ENCODE measurements at regions of chr19 and their contacts with region 1.

Region 1: GRCh38 chr19:55216461-55217198 is 7.3 kb upstream of the PTPRH start:
- DNase-seq: peak; percentile 96
- ATAC-seq: peak; percentile 87
- H3K4me3 ChIP-seq: peak overlapping the region; percentile 69 to 94 (median 89)
- H3K27ac ChIP-seq: peak overlapping the region; percentile 89
- H3K4me1 ChIP-seq: peaks cover 45% of the 10 kb centered on the region
- H3K27me3 ChIP-seq: no peaks in the 10 kb centered on the region
- CTCF ChIP-seq: peak; percentile 1; the same call in 1 of the 2 replicates
- EP300 ChIP-seq: peak in 1 of 2 experiments; percentile 65; a peak in 2 of 4 replicates
- POLR2A ChIP-seq: peak; percentile 50 to 61
- RAD21 ChIP-seq: peak; percentile 26; the same call in 1 of the 2 replicates

Region 2: DNA sequence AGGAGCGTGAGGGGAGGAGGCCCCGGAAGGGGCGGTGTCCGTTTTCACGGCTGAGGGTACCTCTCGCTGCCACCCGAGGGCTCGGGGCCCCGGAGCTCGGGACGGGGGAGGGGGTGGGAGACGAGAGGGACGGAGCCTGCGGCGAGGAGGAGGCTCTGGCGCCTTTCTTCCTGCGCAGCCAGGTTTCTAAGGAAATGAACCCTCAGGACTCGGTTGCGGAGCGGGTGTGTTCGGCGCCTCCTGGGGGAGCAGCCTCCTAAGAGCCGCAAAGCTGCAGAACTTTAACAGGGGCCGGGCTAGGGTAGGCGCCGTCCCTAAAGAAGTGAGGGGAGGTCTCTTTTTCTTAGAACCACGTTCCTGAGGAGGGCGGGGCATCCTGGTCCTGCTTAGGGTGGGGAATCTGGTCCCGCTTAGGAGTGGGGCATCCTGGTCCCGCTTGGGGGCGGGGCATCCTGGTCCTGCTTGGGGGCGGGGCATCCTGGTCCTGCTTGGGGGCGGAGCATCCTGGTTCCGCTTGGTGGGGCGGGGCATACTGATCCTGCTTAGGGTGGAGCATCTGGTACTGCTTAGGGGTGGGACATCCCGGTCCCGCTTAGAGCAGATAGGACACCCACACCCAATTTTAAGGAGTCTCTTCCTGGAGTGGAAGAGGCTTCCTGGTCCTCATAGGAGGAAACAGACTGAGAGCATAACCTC is 42.8 kb before region 1 on chr19:
- CTCF ChIA-PET with region 1: no interaction called
- POLR2A ChIA-PET with region 1: no interaction called
- in situ Hi-C with region 1: no loop called
- intact Hi-C with region 1: no loop called
- DNase-seq: peak; percentile 39
- ATAC-seq: peak; percentile 49
- H3K4me3 ChIP-seq: peak overlapping the region; percentile 51 to 77 (median 64)
- H3K27ac ChIP-seq: no peak overlapping the region
- H3K4me1 ChIP-seq: peaks cover 26% of the 10 kb centered on the region
- H3K27me3 ChIP-seq: peaks cover 3 to 48% of the 10 kb centered on the region in 2 experiments
- CTCF ChIP-seq: 0 out of 2 replicates have a peak, but pooled peaks have one; percentile 14
- EP300 ChIP-seq: no peak
- POLR2A ChIP-seq: no peak
- RAD21 ChIP-seq: no peak

Region 3: DNA sequence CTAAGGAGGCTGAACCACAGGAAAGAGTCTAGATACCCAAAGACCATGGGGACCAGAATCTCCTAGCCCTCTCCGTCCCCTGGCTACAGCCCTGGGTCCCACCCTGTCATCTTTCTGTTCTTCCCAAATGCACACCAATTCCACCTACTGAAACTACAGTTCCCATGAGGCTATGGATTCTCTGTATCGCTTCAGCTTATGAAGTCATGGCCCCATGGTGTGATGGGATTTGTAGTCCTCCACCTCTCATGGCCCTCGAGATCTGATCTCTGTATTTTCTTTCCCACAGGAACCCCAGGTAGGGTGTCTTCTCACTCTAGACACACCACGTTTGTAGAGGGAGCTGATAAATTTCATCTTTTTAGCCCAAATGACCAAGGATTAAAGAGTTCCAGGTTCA is 19.1 kb before region 1 on chr19:
- CTCF ChIA-PET with region 1: no interaction called
- POLR2A ChIA-PET with region 1: interaction called, 3 read pairs
- in situ Hi-C with region 1: no loop called
- intact Hi-C with region 1: loop called (anchors 1 kb)
- DNase-seq: no peak
- ATAC-seq: no peak
- H3K4me3 ChIP-seq: no peak overlapping the region
- H3K27ac ChIP-seq: no peak overlapping the region
- H3K4me1 ChIP-seq: no peaks in the 10 kb centered on the region
- H3K27me3 ChIP-seq: no peaks in the 10 kb centered on the region
- CTCF ChIP-seq: no peak
- EP300 ChIP-seq: no peak
- POLR2A ChIP-seq: 0 out of 4 replicates have a peak, but pooled peaks of 1 of the 2 experiments have one; percentile 1
- RAD21 ChIP-seq: no peak

Region 4: DNA sequence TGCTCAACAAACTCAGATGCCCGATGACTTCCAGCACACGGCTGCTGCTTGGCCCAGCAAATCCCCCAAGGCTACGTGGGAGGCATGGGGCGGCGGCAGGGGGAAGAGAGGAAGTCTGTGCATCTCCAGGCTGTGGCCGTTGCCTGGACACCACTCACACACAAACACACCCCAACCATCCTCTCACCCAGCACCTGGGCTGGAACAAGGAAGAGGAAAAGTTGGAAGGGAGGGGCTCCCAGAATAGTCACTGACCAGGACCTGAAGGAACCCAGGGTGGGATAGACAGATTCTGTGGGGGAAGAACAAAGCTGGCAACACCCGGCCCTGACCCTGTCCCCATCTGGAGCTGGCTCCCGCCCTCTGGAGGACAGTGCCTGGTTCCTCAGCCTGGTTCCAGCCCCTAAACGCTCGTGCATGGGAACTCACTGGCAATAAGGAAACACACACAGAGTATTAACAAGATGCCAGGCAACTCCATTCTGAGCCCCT is 31.0 kb after region 1 on chr19:
- CTCF ChIA-PET with region 1: no interaction called
- POLR2A ChIA-PET with region 1: no interaction called
- in situ Hi-C with region 1: no loop called
- intact Hi-C with region 1: no loop called
- DNase-seq: no peak
- ATAC-seq: no peak; the same call in 2 of the 3 replicates
- H3K4me3 ChIP-seq: no peak overlapping the region
- H3K27ac ChIP-seq: no peak overlapping the region
- H3K4me1 ChIP-seq: peaks cover 31% of the 10 kb centered on the region
- H3K27me3 ChIP-seq: no peaks in the 10 kb centered on the region
- CTCF ChIP-seq: no peak
- EP300 ChIP-seq: no peak
- POLR2A ChIP-seq: no peak
- RAD21 ChIP-seq: no peak

Region 5: GRCh38 chr19:55289117-55289796 is 72.6 kb after region 1 on chr19:
- CTCF ChIA-PET with region 1: no interaction called
- POLR2A ChIA-PET with region 1: no interaction called
- in situ Hi-C with region 1: no loop called
- intact Hi-C with region 1: loop called (anchors 1 kb)
- DNase-seq: no peak
- ATAC-seq: no peak
- H3K4me3 ChIP-seq: no peak overlapping the region
- H3K27ac ChIP-seq: no peak overlapping the region
- H3K4me1 ChIP-seq: peaks cover 25% of the 10 kb centered on the region
- H3K27me3 ChIP-seq: peaks cover 0 to 21% of the 10 kb centered on the region in 2 experiments
- CTCF ChIP-seq: no peak
- EP300 ChIP-seq: no peak
- POLR2A ChIP-seq: no peak
- RAD21 ChIP-seq: no peak

Region 6: DNA sequence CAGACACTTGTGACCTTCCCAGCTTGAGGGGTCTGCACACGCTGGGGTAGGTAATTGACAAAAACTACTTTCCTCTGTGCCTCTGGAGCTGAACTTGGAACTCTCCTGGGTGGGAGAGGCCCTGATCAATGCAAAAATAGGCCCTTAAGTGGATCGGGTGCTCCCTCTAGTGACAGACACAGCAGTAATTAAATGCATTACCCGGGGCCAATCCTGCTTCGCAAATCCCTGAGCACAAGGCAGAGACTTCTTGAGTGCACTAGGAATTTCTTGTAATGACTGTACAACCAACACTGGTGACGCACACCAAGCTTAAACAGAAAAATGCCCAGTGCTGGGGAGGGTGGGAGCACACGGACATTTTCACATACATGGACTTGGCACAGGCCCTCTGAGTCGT is 201.6 kb after region 1 on chr19:
- CTCF ChIA-PET with region 1: interaction called, 8 read pairs
- POLR2A ChIA-PET with region 1: no interaction called
- in situ Hi-C with region 1: loop called (anchors 5 kb)
- intact Hi-C with region 1: loop called (anchors 1 kb)
- DNase-seq: peak; percentile 70
- ATAC-seq: peak; percentile 92
- H3K4me3 ChIP-seq: no peak overlapping the region
- H3K27ac ChIP-seq: no peak overlapping the region
- H3K4me1 ChIP-seq: peaks cover 10% of the 10 kb centered on the region
- H3K27me3 ChIP-seq: peaks cover 0 to 11% of the 10 kb centered on the region in 2 experiments; a peak in 1 of 5 replicates
- CTCF ChIP-seq: peak; percentile 93
- EP300 ChIP-seq: no peak
- POLR2A ChIP-seq: no peak
- RAD21 ChIP-seq: peak; percentile 84